BJ (cell line): ENCODE measurements at regions of chr17 and their contacts with region 1.

Region 1: DNA sequence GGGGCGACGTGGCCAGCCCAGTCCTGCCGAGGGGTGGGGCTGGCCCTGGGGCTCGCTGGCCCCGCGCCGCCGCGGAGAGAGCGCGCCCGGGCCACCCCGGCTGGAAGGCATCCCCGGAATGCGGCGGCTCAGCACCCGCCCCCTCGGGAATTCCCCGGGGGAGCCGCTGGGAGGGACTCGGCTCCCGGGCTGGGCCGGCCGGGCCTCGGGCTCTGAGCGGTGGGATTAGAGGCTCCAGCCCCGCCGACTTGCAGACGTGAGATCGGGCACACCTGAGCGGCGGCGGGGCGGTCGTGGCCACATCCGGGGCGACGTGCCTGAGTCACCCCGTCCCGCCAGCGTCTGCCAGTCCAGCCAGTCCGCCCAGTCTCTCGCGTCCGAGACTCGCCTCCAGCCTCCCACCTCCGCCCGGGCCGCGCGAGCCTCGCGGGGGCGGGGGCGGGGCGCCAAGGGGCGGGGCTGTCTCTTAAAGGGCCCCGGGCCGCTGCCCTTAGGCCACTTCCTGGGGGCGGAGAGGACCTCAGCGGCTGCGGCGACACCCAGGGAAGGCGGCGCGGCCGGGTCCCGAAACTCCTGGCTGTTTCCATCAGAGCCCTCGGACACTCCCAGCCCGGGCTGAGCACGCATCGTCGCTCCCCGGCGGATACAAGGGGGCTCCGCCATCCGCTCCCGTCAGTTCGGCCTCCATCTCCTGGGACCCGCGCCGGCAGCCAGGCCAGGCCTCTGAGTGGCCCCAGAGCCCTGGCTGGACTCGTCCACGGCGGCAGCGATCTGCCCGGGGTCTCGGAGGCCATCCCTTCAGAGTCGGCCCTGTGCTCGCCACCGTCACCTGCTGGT is at the start of gene KCTD11:
- DNase-seq: peak; percentile 63
- H3K4me3 ChIP-seq: peak within 1 kb of the TSS; percentile 71
- H3K27me3 ChIP-seq: no peaks in the 10 kb centered on the region
- CTCF ChIP-seq: no peak; the same call in 1 of the 2 replicates
- polyA plus RNA-seq, gene KCTD11: 16.2 and 19.8 TPM in 2 replicates

Region 2: GRCh38 chr17:7252176-7253043 is 99.5 kb before region 1 on chr17 and contains the start of gene ELP5:
- CTCF ChIA-PET with region 1: no interaction called
- POLR2A ChIA-PET with region 1: no interaction called
- DNase-seq: peak; percentile 57
- H3K4me3 ChIP-seq: peak within 1 kb of the TSS; percentile 78
- H3K27me3 ChIP-seq: no peaks in the 10 kb centered on the region
- CTCF ChIP-seq: no peak; the same call in 1 of the 2 replicates
- polyA plus RNA-seq, gene ELP5: 29.8 and 35.6 TPM in 2 replicates

Region 3: GRCh38 chr17:7296189-7296902 is 55.5 kb before region 1 on chr17:
- CTCF ChIA-PET with region 1: no interaction called
- POLR2A ChIA-PET with region 1: no interaction called
- DNase-seq: no peak
- H3K4me3 ChIP-seq: peak overlapping the region; percentile 16; the same call in 1 of the 2 replicates
- H3K27me3 ChIP-seq: peaks cover 21% of the 10 kb centered on the region
- CTCF ChIP-seq: peak; percentile 75

Region 4: GRCh38 chr17:7367083-7367482 is 15.2 kb after region 1 on chr17:
- CTCF ChIA-PET with region 1: interaction called, 24 read pairs
- POLR2A ChIA-PET with region 1: no interaction called
- DNase-seq: no peak
- H3K4me3 ChIP-seq: no peak overlapping the region
- H3K27me3 ChIP-seq: peaks cover 6% of the 10 kb centered on the region
- CTCF ChIP-seq: no peak

Region 5: DNA sequence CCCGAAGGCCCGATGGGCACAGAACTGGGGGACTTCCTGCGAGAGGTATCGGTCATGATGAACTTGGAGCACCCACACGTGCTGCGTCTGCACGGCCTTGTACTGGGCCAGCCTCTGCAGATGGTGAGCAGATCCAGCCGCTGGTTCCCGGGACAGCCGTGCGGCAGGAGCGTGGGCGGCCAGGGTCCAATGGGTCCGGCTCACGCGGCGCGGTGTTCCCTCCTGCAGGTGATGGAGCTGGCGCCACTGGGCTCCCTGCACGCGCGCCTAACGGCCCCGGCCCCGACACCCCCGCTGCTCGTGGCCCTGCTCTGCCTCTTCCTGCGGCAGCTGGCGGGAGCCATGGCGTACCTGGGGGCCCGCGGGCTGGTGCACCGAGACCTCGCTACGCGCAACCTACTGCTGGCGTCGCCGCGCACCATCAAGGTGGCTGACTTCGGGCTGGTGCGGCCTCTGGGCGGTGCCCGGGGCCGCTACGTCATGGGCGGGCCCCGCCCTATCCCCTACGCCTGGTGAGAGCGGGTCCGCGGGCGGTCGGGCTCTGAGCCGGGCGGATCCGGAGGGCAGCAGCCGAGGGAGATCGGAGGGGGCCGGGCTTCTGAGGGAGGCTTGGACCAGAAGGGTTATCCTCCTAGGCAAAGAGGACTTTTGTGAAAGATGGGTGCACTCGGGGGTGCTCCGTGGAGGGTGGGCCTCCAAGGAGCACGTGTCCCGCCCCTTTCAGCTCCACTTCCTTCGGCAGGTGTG is 32.0 kb after region 1 on chr17:
- CTCF ChIA-PET with region 1: interaction called, 26 read pairs
- POLR2A ChIA-PET with region 1: no interaction called
- DNase-seq: no peak
- H3K4me3 ChIP-seq: peak overlapping the region; percentile 34
- H3K27me3 ChIP-seq: peaks cover 8% of the 10 kb centered on the region
- CTCF ChIP-seq: no peak

Region 6: DNA sequence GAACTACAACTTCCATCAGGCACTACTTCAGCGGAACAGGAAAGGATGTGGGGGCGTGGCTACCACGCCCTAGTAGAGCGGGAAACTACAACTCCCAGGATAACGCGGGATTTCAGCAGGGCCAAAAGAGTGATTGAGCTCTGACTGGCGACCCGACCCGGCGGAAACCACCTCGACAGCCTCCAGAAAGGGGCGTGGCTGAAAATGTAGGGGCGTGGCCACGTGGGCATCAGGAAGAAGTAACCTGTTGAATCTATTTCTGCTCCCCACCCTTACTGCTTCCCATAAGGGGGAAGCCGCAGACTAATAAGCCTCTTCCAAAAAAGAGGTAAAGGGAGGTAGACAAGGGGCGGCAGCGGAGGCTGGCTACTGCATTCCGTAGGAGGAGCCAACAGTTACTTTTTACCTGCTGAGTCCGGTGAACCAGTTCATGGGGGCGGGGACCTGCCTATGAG is 83.4 kb after region 1 on chr17 and contains the start of gene TMEM102:
- CTCF ChIA-PET with region 1: interaction called, 45 read pairs
- POLR2A ChIA-PET with region 1: no interaction called
- DNase-seq: peak; percentile 79
- H3K4me3 ChIP-seq: peak within 1 kb of the TSS; percentile 44
- H3K27me3 ChIP-seq: peaks cover 13% of the 10 kb centered on the region
- CTCF ChIP-seq: no peak
- polyA plus RNA-seq, gene TMEM102: 1.8 and 3.0 TPM in 2 replicates

Region 7: GRCh38 chr17:7477392-7478275 is 125.8 kb after region 1 on chr17:
- CTCF ChIA-PET with region 1: interaction called, 5 read pairs
- POLR2A ChIA-PET with region 1: interaction called, 20 read pairs
- DNase-seq: peak; percentile 87
- H3K4me3 ChIP-seq: peak overlapping the region; percentile 85
- H3K27me3 ChIP-seq: no peaks in the 10 kb centered on the region
- CTCF ChIP-seq: no peak